ENCODE measurements at regions of chr9 and their contacts with region 1.

Region 1: DNA sequence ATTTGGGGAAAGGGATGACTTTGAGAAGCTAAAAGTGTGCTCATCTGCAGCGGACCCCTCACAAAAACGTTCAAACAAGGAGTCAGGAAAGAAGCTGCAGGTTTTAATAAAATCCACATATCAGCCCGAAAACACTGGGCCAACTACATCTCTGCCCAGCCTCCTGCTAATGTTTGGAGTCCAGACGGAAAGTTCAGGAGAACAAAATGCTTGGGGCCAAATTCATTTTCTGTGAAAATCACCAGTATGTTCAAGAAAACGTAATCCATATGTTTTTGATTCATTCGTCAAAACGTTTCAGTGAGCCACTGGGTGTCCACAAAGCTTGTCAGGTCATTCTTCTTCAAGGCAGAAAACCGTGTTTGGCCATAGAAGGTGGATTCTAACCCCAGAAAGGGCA is 87.5 kb upstream of the GAS1 start:
- DNase-seq: no peak
- H3K4me3 ChIP-seq: no peak overlapping the region
- H3K27ac ChIP-seq: peak overlapping the region in 1 of 2 donors; percentile 47
- H3K4me1 ChIP-seq: no peaks in the 10 kb centered on the region
- H3K27me3 ChIP-seq: no peaks in the 10 kb centered on the region
- CTCF ChIP-seq: no peak
- POLR2A ChIP-seq: no peak

Region 2: DNA sequence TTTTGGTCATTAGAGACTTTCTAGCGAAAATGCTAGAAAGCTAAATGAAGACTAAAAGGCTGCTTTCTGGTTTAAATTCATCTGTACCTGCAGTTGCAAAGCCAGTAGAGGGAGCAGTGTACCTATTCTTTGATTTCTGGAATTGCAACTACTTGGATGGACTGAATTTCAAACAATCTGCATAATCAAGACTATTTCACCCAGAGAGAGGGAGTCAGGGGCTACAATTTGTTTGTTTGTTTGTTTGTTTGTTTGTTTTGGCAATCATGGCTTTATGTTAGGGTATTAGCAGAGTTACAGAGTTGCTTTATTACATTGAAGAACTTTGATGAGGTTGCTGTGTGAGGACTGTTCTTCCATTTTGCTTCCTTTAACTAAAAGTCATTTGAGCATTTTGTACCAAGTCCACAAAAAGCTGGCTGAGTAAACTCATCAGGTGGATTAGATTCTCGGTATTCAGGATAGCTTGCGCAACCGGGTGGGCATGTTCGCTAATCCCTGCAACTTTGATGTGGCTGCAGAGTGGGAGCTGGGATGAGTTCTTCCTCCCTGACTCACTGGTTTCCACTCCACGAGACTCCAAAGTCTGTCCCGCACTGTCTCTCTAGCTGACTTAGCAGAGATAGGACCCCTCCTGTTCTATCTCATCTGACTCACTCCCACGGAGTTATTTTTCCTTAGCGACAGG is 600.7 kb before region 1 on chr9:
- intact Hi-C with region 1: no loop called
- DNase-seq: peak; percentile 13
- H3K4me3 ChIP-seq: no peak overlapping the region
- H3K27ac ChIP-seq: peak overlapping the region in 1 of 2 donors; percentile 33
- H3K4me1 ChIP-seq: no peaks in the 10 kb centered on the region
- H3K27me3 ChIP-seq: no peaks in the 10 kb centered on the region
- CTCF ChIP-seq: peak in 3 of 4 experiments; percentile 60 to 74 (median 72)
- POLR2A ChIP-seq: no peak

Region 3: DNA sequence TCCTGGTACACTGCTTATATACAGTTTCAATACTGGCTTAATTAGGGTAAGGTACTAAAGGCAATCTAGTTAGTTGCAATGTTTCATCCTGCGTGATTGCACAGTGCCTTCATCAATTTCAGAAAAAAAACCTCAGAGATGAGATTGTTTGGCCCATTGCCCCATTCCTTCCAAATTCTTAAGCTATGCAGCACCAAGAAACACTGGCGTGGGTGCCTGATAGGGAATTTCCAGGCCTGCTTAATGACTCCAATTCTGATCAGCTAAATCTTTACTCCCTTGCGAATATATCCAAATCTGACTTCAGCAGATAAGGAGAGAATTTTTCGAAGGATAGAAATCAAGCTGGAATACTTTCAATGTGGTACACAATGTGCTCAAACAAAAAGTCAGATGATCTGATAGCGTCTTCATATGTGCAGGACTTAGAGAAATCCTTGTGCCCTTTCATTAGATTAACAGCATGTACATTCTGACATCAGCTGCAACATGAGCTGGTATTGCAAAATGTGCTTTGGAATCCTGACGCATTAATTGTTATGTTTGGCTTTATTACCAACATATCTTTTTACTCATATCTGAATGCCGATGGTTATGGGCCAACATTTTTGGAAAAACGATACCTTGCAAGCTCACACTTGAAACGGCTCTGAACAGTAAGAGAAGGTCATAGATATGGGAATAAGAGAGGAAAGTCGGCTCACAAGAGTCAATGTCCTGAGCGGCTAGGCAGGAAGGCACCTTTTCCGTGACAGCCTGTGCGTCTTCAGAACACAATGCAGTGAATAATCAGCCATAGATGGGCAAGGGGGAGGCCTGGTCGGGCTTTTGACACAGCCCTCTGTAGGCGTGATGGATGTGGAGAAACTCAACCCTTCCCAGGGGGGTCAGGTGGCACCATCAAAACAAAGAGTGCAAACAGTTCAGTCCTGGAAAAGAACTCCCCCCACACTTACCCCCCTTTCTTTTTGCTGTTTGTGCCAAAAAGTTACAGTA is 51.3 kb before region 1 on chr9:
- intact Hi-C with region 1: loop called (anchors 5 kb)
- DNase-seq: peak; percentile 79
- H3K4me3 ChIP-seq: no peak overlapping the region
- H3K27ac ChIP-seq: peak overlapping the region; percentile 64 to 80
- H3K4me1 ChIP-seq: peaks cover 4% of the 10 kb centered on the region
- H3K27me3 ChIP-seq: no peaks in the 10 kb centered on the region
- CTCF ChIP-seq: no peak
- POLR2A ChIP-seq: no peak